B cell (primary cell): ENCODE measurements at regions of chr12 and their contacts with region 1.

Region 1: DNA sequence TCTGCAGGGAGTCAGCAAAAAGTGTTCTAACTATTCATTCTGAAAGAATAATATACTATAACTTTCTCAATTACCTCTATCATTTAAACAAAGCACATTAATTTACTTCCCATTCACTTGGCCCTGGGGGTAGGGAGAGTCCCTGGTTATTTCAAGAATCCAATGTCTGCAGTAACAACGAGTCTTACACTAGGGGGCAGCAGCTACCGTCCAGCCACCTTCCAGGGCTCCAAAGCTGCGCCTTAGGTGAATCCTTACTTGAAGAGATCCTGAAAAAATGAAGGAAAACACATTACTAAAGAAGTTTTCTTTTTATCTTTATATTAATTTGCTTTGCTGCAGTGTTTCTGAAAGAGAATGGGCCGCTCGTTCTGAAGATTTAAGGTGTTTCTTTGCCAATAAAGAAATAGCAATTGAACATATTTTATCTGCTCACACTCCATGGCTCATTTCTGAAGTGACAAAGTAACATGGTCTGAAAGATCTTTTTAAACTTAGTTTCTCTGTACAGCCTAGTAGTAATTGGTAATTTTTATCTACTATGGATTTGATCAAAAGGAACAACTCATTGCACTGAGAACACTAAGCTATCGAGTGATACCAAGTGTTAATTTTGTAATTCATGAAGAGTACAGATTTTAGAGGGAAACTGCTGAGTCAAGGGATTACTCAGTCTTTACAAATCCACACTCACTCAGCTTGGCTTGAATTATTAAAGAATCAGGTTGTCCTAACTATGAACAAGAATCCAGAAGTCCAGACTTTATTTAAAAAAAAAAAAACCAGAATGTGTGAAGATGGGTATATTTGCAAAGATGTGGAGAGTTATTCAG is 27.6 kb downstream of the BHLHE41 start:
- DNase-seq: peak; percentile 81
- ATAC-seq: peak; percentile 93
- H3K4me3 ChIP-seq: no peak overlapping the region
- H3K4me3 Mint-ChIP-seq: no peak overlapping the region
- H3K27ac ChIP-seq: no peak overlapping the region
- H3K27ac Mint-ChIP-seq: no peak overlapping the region
- H3K4me1 ChIP-seq: no peaks in the 10 kb centered on the region
- H3K4me1 Mint-ChIP-seq: no peaks in the 10 kb centered on the region
- H3K27me3 ChIP-seq: no peaks in the 10 kb centered on the region
- H3K27me3 Mint-ChIP-seq: no peaks in the 10 kb centered on the region
- CTCF ChIP-seq: peak; percentile 100

Region 2: DNA sequence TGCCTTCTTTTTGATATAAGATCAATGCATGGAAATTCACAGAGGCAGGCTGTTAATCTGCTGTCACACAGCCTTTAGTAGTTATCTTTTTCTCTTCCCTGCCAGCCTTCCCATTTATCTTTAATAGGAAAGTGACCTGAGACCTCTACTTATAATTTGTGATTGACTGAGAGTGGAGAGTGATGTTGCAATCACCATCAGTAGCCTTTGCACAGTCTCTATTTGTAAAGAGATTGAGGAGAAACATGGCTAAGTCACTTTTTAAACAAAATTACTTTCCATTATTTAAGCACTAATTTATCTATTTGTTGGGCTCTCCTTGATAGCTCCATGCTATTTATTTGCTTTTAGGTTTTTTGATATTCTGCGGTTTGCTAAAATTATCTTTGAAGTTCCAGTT is 564.1 kb before region 1 on chr12:
- CTCF ChIA-PET with region 1: no interaction called
- POLR2A ChIA-PET with region 1: no interaction called
- intact Hi-C with region 1: no loop called
- DNase-seq: no peak
- ATAC-seq: no peak
- H3K4me3 ChIP-seq: no peak overlapping the region
- H3K4me3 Mint-ChIP-seq: no peak overlapping the region
- H3K27ac ChIP-seq: no peak overlapping the region
- H3K27ac Mint-ChIP-seq: no peak overlapping the region
- H3K4me1 ChIP-seq: no peaks in the 10 kb centered on the region
- H3K4me1 Mint-ChIP-seq: no peaks in the 10 kb centered on the region
- H3K27me3 ChIP-seq: peaks cover 0 to 8% (median 0%) of the 10 kb centered on the region in 4 experiments
- H3K27me3 Mint-ChIP-seq: peaks cover 20% of the 10 kb centered on the region
- CTCF ChIP-seq: no peak

Region 3: DNA sequence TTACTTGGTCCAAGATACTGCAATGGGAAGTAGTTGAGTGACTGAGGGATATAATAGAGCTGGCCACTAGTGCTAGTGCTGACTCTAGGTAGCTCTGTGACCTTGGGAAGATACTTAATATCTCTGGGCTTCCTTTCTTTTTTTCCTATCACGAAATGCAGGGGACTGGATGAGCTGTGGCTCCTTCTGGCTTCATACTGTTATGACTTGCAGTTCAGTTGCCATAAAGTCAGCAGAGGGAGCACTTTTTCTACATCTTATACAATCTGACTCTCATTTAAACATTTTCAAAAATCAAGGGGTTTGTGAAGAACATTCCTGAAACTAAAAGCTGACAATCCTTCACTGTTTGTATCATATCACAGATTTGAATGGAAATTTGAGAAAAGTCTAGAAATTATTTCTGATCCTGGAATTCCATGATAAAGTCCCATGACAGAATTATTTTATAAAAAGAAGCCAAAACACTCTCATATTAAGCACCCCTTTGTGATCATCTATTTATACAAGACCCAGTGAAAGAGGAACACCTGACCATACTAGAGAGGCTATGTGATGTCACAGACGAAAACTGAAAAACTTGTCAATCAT is 22.2 kb after region 1 on chr12:
- CTCF ChIA-PET with region 1: interaction called, 24 read pairs
- POLR2A ChIA-PET with region 1: no interaction called
- intact Hi-C with region 1: no loop called
- DNase-seq: peak; percentile 70
- ATAC-seq: no peak
- H3K4me3 ChIP-seq: no peak overlapping the region
- H3K4me3 Mint-ChIP-seq: peak overlapping the region; percentile 53
- H3K27ac ChIP-seq: peak overlapping the region in 1 of 2 donors; percentile 6
- H3K27ac Mint-ChIP-seq: peak overlapping the region; percentile 57
- H3K4me1 ChIP-seq: peaks cover 66 to 72% of the 10 kb centered on the region in 2 donors
- H3K4me1 Mint-ChIP-seq: peaks cover 74% of the 10 kb centered on the region
- H3K27me3 ChIP-seq: peaks cover 0 to 10% (median 0%) of the 10 kb centered on the region in 4 experiments
- H3K27me3 Mint-ChIP-seq: no peaks in the 10 kb centered on the region
- CTCF ChIP-seq: peak; percentile 62

Region 4: DNA sequence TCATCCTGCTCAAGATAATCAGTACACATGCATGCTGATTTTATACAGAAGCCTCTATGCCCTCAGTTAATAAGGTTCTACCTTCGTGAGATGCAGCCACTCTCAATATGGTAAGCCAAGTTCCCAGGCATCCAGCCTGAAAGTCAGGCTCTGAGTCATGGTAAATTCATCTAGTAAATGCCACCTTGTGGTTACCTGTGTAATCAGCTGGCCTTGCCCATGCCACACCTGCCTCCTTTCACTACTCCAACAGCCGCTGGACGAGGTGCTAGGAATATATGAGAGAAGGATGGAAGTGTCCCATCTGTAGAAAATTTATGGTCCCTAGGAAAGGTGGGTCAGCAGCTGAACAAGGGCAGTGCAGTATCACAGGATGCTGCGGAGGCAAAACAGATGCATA is 305.4 kb after region 1 on chr12:
- CTCF ChIA-PET with region 1: interaction called, 11 read pairs
- POLR2A ChIA-PET with region 1: no interaction called
- intact Hi-C with region 1: loop called (anchors 1 kb)
- DNase-seq: peak; percentile 43
- ATAC-seq: peak; percentile 53
- H3K4me3 ChIP-seq: no peak overlapping the region
- H3K4me3 Mint-ChIP-seq: no peak overlapping the region
- H3K27ac ChIP-seq: no peak overlapping the region
- H3K27ac Mint-ChIP-seq: no peak overlapping the region
- H3K4me1 ChIP-seq: peaks cover 0 to 4% of the 10 kb centered on the region in 2 donors
- H3K4me1 Mint-ChIP-seq: peaks cover 2% of the 10 kb centered on the region
- H3K27me3 ChIP-seq: no peaks in the 10 kb centered on the region
- H3K27me3 Mint-ChIP-seq: no peaks in the 10 kb centered on the region
- CTCF ChIP-seq: peak; percentile 38

Region 5: DNA sequence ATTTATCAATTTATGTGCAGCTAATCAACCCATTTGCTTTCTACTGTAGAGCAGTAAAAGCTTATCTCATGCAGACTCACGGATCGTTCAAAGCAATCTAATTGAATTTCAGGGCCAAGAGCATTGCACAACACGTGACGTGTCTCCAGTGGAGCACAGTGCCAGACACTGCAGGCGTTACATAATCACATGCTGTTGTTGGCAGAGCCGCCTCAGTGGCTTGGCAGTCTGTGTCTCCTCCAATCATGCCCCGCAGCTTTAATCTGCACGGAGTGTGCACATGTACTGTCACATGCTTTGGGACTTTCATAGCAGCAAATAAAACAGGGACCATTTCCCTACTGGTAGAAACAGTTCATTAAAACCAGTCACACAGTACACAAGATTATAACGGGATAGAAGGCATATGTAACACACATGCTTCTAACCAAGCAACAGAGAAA is 426.5 kb after region 1 on chr12:
- CTCF ChIA-PET with region 1: interaction called, 17 read pairs
- POLR2A ChIA-PET with region 1: no interaction called
- intact Hi-C with region 1: loop called (anchors 1 kb)
- DNase-seq: no peak
- ATAC-seq: no peak
- H3K4me3 ChIP-seq: no peak overlapping the region
- H3K4me3 Mint-ChIP-seq: no peak overlapping the region
- H3K27ac ChIP-seq: no peak overlapping the region
- H3K27ac Mint-ChIP-seq: no peak overlapping the region
- H3K4me1 ChIP-seq: peaks cover 5 to 6% of the 10 kb centered on the region in 2 donors
- H3K4me1 Mint-ChIP-seq: peaks cover 10% of the 10 kb centered on the region
- H3K27me3 ChIP-seq: no peaks in the 10 kb centered on the region
- H3K27me3 Mint-ChIP-seq: no peaks in the 10 kb centered on the region
- CTCF ChIP-seq: no peak

Region 6: DNA sequence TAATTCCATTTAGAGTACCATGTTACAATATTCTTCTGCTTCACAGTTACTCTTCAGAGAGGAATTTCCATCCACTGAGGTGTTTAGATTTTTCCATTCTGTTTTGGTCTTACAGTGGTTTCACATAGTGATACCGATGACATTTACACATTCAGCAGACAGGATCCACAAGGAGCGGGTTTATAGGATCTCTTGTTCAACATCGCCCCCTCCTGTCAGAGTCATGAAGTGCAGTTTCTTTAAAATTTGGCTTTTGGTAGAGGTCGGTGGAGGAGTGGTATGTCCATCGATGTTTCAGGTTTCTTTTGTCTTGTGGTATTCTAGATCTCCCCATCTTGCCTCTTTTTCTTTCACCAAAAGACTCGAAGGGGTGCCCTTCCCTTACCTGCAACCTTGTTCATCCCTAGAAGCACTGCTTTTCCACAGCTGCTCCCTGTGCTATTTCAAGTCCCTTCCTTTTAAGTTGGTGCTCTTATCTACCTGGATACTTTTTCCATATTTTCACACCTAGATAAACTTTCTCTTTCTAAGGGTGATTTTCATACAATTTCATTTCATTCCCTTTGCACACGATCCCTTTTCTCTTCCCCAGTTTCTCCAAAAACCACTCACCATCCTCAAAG is 554.4 kb after region 1 on chr12:
- CTCF ChIA-PET with region 1: interaction called, 22 read pairs
- POLR2A ChIA-PET with region 1: no interaction called
- intact Hi-C with region 1: loop called (anchors 1 kb)
- DNase-seq: peak; percentile 64
- ATAC-seq: peak; percentile 57
- H3K4me3 ChIP-seq: no peak overlapping the region
- H3K4me3 Mint-ChIP-seq: no peak overlapping the region
- H3K27ac ChIP-seq: no peak overlapping the region
- H3K27ac Mint-ChIP-seq: no peak overlapping the region
- H3K4me1 ChIP-seq: no peaks in the 10 kb centered on the region
- H3K4me1 Mint-ChIP-seq: no peaks in the 10 kb centered on the region
- H3K27me3 ChIP-seq: no peaks in the 10 kb centered on the region
- H3K27me3 Mint-ChIP-seq: no peaks in the 10 kb centered on the region
- CTCF ChIP-seq: peak; percentile 85

Region 7: DNA sequence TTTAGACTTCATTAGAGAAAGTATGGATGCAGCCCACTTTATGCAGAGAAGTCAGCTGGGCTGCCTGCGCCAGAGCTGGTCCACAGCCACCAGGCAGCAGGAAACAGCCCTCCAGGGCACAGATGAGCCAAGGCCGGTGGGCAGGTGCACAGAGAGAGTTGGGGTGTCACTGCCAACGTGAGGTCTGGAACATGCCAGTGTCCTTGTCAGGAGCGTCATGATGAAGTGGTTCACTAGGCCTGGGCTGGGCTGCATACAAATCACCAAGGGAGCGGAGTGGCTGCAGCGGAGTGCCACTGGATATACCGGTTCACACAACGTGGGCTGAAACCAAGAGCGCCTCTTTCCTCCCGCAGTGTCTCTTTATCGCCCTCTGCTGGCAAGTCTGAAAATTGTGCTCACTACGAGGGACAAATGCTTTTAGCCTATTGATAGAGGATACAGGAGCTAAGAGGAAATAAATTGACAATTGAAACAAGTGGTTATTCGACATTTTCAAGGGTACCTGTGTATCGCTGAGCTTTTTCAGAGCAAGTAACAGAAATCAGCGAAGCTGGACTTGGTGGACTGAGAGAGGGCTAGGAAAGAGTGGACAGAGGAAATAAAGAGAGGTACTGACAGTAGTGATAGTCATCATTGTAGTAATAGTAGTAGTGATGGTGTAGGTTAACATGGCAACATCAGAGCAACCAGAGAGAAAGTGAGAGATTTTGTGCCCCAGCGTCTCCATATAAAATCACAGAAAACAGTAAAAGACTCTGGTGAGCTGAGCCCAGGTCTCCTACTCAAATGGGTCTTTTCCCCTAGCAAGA is 787.7 kb after region 1 on chr12:
- CTCF ChIA-PET with region 1: no interaction called
- POLR2A ChIA-PET with region 1: no interaction called
- intact Hi-C with region 1: loop called (anchors 1 kb)
- DNase-seq: peak; percentile 89
- ATAC-seq: peak; percentile 96
- H3K4me3 ChIP-seq: peak overlapping the region in 2 of 5 experiments; percentile 3 to 26
- H3K4me3 Mint-ChIP-seq: peak overlapping the region; percentile 67
- H3K27ac ChIP-seq: no peak overlapping the region
- H3K27ac Mint-ChIP-seq: no peak overlapping the region
- H3K4me1 ChIP-seq: peaks cover 4 to 8% of the 10 kb centered on the region in 2 donors
- H3K4me1 Mint-ChIP-seq: peaks cover 9% of the 10 kb centered on the region
- H3K27me3 ChIP-seq: no peaks in the 10 kb centered on the region
- H3K27me3 Mint-ChIP-seq: no peaks in the 10 kb centered on the region
- CTCF ChIP-seq: peak; percentile 97